GM13977 (cell line): ENCODE measurements at regions of chr1 and their contacts with region 1.

Region 1: GRCh38 chr1:7070389-7071029 is 285.3 kb downstream of the CAMTA1 start:
- DNase-seq: peak; percentile 82
- CTCF ChIP-seq: peak; percentile 92

Region 2: GRCh38 chr1:6701437-6702153 is 368.9 kb before region 1 on chr1 and contains the start of gene DNAJC11:
- in situ Hi-C with region 1: loop called (anchors 25 kb)
- DNase-seq: peak; percentile 97
- CTCF ChIP-seq: peak; percentile 100

Region 3: GRCh38 chr1:7117599-7118281 is 47.2 kb after region 1 on chr1:
- in situ Hi-C with region 1: no loop called
- DNase-seq: no peak
- CTCF ChIP-seq: no peak